BJ (cell line): ENCODE measurements at regions of chr4 and their contacts with region 1.

Region 1: DNA sequence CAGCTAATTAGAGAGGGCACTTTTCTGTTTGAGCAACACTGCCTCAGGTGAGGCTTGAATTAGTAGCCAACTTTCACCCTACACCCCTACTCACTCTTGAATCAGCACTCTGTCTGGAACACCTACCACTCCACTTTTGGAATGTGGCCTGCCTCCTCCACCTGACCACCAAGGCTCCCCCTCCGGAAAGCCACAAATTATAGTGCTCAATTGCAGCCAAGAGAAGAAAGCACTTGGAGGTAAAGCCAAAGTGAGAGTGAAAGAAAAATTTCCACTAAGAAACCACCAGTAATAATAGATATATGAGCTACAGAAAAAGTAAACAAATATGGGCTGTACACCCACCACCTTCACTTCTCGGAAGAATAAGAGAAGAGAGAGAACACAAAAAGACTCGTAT is 41.1 kb downstream of the PPP3CA start:
- DNase-seq: no peak
- H3K4me3 ChIP-seq: no peak overlapping the region
- H3K27me3 ChIP-seq: no peaks in the 10 kb centered on the region
- CTCF ChIP-seq: no peak

Region 2: GRCh38 chr4:101259876-101260275 is 46.3 kb before region 1 on chr4:
- CTCF ChIA-PET with region 1: no interaction called
- POLR2A ChIA-PET with region 1: interaction called, 18 read pairs
- DNase-seq: no peak
- H3K4me3 ChIP-seq: no peak overlapping the region
- H3K27me3 ChIP-seq: no peaks in the 10 kb centered on the region
- CTCF ChIP-seq: no peak

Region 3: GRCh38 chr4:101321481-101322042 is 15.3 kb after region 1 on chr4:
- CTCF ChIA-PET with region 1: interaction called, 3 read pairs
- POLR2A ChIA-PET with region 1: interaction called, 28 read pairs
- DNase-seq: no peak
- H3K4me3 ChIP-seq: no peak overlapping the region
- H3K27me3 ChIP-seq: no peaks in the 10 kb centered on the region
- CTCF ChIP-seq: no peak

Region 4: GRCh38 chr4:101693842-101694398 is 387.7 kb after region 1 on chr4:
- CTCF ChIA-PET with region 1: no interaction called
- POLR2A ChIA-PET with region 1: no interaction called
- DNase-seq: no peak
- H3K4me3 ChIP-seq: no peak overlapping the region
- H3K27me3 ChIP-seq: no peaks in the 10 kb centered on the region
- CTCF ChIP-seq: no peak